ENCODE measurements at regions of chr3 and their contacts with region 1.

Region 1: GRCh38 chr3:60086811-60087210 is 1037.0 kb upstream of the CFAP20DC start:
- DNase-seq: peak; percentile 50
- H3K4me3 Mint-ChIP-seq: no peak overlapping the region
- H3K27ac Mint-ChIP-seq: peak overlapping the region; percentile 91
- H3K4me1 Mint-ChIP-seq: peaks cover 48% of the 10 kb centered on the region
- H3K27me3 Mint-ChIP-seq: no peaks in the 10 kb centered on the region

Region 2: DNA sequence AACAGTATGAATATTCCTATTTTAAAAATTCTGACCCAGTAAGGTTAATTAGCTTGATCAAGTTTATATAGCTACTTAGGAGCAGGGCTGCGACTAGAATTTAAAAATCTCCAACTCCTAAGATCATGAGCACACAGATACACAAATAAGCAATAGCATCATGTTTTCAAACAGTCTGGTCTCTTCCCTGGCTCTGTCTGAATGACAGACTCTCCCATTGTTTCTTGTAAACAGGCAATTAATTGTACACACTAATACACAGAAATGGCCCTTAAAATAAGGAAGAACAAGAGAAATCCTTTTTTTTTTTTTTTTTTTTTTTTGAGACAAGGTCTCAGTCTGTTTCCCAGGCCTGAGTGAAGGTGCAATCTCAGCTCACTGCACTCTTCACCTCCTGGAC is 27.4 kb after region 1 on chr3:
- intact Hi-C with region 1: no loop called
- DNase-seq: no peak
- H3K4me3 Mint-ChIP-seq: no peak overlapping the region
- H3K27ac Mint-ChIP-seq: no peak overlapping the region
- H3K4me1 Mint-ChIP-seq: no peaks in the 10 kb centered on the region
- H3K27me3 Mint-ChIP-seq: no peaks in the 10 kb centered on the region

Region 3: GRCh38 chr3:60301142-60301541 is 214.3 kb after region 1 on chr3:
- intact Hi-C with region 1: loop called (anchors 10 kb)
- DNase-seq: no peak
- H3K4me3 Mint-ChIP-seq: no peak overlapping the region
- H3K27ac Mint-ChIP-seq: no peak overlapping the region
- H3K4me1 Mint-ChIP-seq: peaks cover 16% of the 10 kb centered on the region
- H3K27me3 Mint-ChIP-seq: no peaks in the 10 kb centered on the region

Region 4: GRCh38 chr3:61520966-61521628 is 1434.3 kb after region 1 on chr3:
- intact Hi-C with region 1: loop called (anchors 10 kb)
- DNase-seq: peak; percentile 37
- H3K4me3 Mint-ChIP-seq: peak overlapping the region; percentile 42
- H3K27ac Mint-ChIP-seq: peak overlapping the region; percentile 87
- H3K4me1 Mint-ChIP-seq: peaks cover 41% of the 10 kb centered on the region
- H3K27me3 Mint-ChIP-seq: no peaks in the 10 kb centered on the region

Measured in activated T-helper 2 cell treated with anti-CD3 and anti-CD28 coated beads, Interferon-gamma antibody, Interleukin-2, Interleukin-4, amounts not matched to agents 10 μg/mL and 5 μg/mL and 100 μg/mL, durations not matched to agents 14 hours and 24 hours and 36 hours (primary cell).